IMR-90 (cell line): ENCODE measurements at regions of chr14 and their contacts with region 1.

Region 1: GRCh38 chr14:54209511-54210250 is 187.1 kb upstream of the CDKN3 start:
- DNase-seq: peak; percentile 30
- ATAC-seq: peak; percentile 42
- H3K4me3 ChIP-seq: no peak overlapping the region
- H3K27ac ChIP-seq: no peak overlapping the region
- H3K4me1 ChIP-seq: peaks cover 4% of the 10 kb centered on the region; the same call in 1 of the 2 replicates
- H3K27me3 ChIP-seq: no peaks in the 10 kb centered on the region
- CTCF ChIP-seq: no peak
- POLR2A ChIP-seq: no peak
- RAD21 ChIP-seq: no peak

Region 2: GRCh38 chr14:54166049-54166950 is 43.4 kb before region 1 on chr14:
- CTCF ChIA-PET with region 1: no interaction called
- POLR2A ChIA-PET with region 1: no interaction called
- dilution Hi-C with region 1: no loop called
- in situ Hi-C with region 1: no loop called
- intact Hi-C with region 1: loop called (anchors 1 kb)
- DNase-seq: no peak
- ATAC-seq: no peak
- H3K4me3 ChIP-seq: no peak overlapping the region
- H3K27ac ChIP-seq: no peak overlapping the region
- H3K4me1 ChIP-seq: no peaks in the 10 kb centered on the region
- H3K27me3 ChIP-seq: peaks cover 16% of the 10 kb centered on the region
- CTCF ChIP-seq: no peak
- POLR2A ChIP-seq: no peak
- RAD21 ChIP-seq: no peak

Region 3: DNA sequence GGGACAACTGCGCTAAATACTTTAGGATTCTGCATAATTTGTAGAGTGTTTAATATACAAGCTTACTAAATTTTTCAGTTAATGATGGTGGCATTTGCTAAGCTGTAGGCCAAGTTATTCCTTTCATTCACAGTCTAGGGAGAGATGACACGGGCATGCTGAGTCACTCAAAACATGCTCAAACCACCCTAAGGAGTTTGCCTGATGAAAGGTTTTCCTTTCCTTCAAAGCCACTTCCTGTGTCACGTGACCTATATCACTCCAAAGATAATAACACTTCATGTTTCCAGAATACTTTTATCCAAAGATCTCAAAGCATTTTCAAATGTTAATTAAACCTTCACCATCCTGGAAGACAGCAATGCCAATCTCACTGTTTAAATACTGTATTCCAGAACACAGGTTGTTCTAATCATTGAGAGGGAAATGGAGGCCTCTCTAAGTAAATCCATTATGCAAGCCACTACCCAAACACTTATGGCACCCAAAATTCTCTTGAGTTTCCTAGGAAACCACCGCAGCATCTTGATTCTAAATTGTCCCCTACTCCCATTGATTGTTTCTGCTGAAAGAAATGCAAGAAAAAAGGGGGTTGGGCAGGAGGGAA is 19.8 kb before region 1 on chr14:
- CTCF ChIA-PET with region 1: no interaction called
- POLR2A ChIA-PET with region 1: no interaction called
- dilution Hi-C with region 1: no loop called
- in situ Hi-C with region 1: no loop called
- intact Hi-C with region 1: loop called (anchors 1 kb)
- DNase-seq: peak; percentile 83
- ATAC-seq: peak; percentile 88
- H3K4me3 ChIP-seq: no peak overlapping the region
- H3K27ac ChIP-seq: no peak overlapping the region
- H3K4me1 ChIP-seq: peaks cover 2% of the 10 kb centered on the region
- H3K27me3 ChIP-seq: no peaks in the 10 kb centered on the region
- CTCF ChIP-seq: no peak
- POLR2A ChIP-seq: no peak
- RAD21 ChIP-seq: no peak